ENCODE measurements at regions of chr4 and their contacts with region 1.

Region 1: GRCh38 chr4:180994722-180995121 is 1248.5 kb upstream of the TENM3 start:
- DNase-seq: no peak
- H3K4me3 ChIP-seq: no peak overlapping the region
- H3K27ac ChIP-seq: no peak overlapping the region
- H3K4me1 ChIP-seq: no peaks in the 10 kb centered on the region
- H3K27me3 ChIP-seq: no peaks in the 10 kb centered on the region
- CTCF ChIP-seq: no peak

Region 2: DNA sequence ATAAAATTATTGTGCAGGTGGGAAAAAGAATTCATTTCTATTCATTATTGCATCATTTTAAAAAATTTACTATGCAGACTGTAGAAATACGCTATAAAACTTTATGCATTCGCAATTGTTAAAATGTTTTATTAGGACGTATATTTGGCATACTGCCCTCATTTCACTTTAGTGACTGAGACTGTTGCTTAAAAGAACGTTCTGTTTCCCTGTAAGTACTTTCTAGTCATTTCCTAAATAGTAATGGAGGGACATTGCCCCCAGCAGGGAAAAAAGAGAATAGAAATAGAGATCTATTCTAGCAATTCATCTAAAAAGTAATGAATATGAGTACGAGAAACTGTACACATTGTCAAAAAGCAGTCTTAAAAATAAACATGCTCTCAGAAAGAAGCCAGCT is 47.3 kb before region 1 on chr4:
- CTCF ChIA-PET with region 1: no interaction called
- POLR2A ChIA-PET with region 1: no interaction called
- intact Hi-C with region 1: no loop called
- DNase-seq: no peak
- H3K4me3 ChIP-seq: no peak overlapping the region
- H3K27ac ChIP-seq: no peak overlapping the region
- H3K4me1 ChIP-seq: no peaks in the 10 kb centered on the region
- H3K27me3 ChIP-seq: no peaks in the 10 kb centered on the region
- CTCF ChIP-seq: no peak

Region 3: DNA sequence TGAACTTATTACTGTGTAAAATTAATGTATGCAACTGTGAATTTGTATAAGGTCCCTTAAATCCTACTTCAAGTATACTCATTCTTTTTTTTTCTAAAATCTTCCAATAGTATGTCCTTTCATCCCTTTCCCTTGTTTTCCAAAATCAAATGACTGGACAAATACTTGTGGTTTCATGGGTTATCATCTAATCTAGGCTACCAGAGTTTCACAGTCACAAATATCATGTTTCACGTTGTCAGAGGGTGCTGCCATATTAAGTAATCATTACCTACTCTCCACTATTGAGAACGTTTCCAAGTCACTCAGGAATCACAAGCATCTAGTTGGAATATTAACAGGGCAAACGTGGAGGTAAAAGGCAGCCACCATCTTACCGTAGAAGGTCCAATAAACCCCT is 13.4 kb after region 1 on chr4:
- CTCF ChIA-PET with region 1: no interaction called
- POLR2A ChIA-PET with region 1: no interaction called
- intact Hi-C with region 1: loop called (anchors 2 kb)
- DNase-seq: no peak
- H3K4me3 ChIP-seq: no peak overlapping the region
- H3K27ac ChIP-seq: no peak overlapping the region
- H3K4me1 ChIP-seq: no peaks in the 10 kb centered on the region
- H3K27me3 ChIP-seq: no peaks in the 10 kb centered on the region
- CTCF ChIP-seq: no peak

Region 4: GRCh38 chr4:181166742-181167399 is 172.1 kb after region 1 on chr4:
- CTCF ChIA-PET with region 1: no interaction called
- POLR2A ChIA-PET with region 1: no interaction called
- intact Hi-C with region 1: no loop called
- DNase-seq: no peak
- H3K4me3 ChIP-seq: no peak overlapping the region
- H3K27ac ChIP-seq: no peak overlapping the region
- H3K4me1 ChIP-seq: no peaks in the 10 kb centered on the region
- H3K27me3 ChIP-seq: no peaks in the 10 kb centered on the region
- CTCF ChIP-seq: no peak

Measured in PC-9 (cell line).